ENCODE measurements at regions of chr1 and their contacts with region 1.

Region 1: DNA sequence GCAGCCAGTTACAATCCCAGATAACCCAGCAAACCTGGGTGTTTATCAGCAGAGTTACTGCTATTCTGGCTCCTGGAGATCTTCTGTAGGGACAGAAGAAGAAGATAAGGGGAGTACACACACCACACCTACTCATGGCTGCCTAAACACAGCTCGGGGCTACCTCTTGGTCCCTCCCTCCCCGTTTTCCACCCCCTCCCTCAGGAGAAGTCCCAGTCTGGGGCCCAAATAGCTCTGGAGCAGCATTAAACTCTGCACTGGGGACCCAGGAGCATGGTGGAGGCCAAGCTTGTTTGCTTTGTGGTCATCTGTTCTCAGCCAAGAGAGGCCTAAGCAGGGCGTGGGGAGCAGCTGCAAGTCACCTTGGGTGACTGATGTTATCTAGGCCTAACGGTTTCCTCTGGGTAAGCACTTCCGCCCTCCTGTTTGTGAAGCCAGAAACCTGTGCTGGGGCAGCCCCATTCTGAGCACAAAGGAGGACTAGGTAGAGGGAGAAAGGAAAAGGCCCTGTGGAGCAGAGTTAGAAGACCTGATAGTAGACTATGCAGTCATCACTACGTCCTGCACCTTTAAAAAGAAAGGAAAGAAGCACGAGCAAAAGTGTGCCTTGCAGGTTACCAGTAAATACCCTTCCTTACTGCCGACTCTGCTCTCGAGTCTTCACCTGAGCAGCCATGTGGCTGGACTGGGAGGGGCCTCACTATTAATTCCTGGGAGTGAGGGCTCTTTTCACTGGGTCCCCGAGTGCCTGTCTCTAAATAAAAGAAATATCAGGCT is 2.0 kb upstream of the RCSD1 start:
- DNase-seq: peak; percentile 47 to 92 (median 71)
- ATAC-seq: peak; percentile 78
- H3K4me3 ChIP-seq: peak overlapping the region; percentile 97
- H3K4me3 Mint-ChIP-seq: peak overlapping the region; percentile 94
- H3K27ac ChIP-seq: peak overlapping the region; percentile 71 to 90
- H3K27ac Mint-ChIP-seq: peak overlapping the region; percentile 93
- H3K4me1 ChIP-seq: peaks cover 54% of the 10 kb centered on the region
- H3K4me1 Mint-ChIP-seq: peaks cover 81% of the 10 kb centered on the region
- H3K27me3 ChIP-seq: no peaks in the 10 kb centered on the region
- H3K27me3 Mint-ChIP-seq: no peaks in the 10 kb centered on the region
- CTCF ChIP-seq: no peak

Region 2: GRCh38 chr1:167584581-167584980 is 43.5 kb before region 1 on chr1:
- CTCF ChIA-PET with region 1: no interaction called
- POLR2A ChIA-PET with region 1: no interaction called
- intact Hi-C with region 1: no loop called
- DNase-seq: no peak
- ATAC-seq: no peak
- H3K4me3 ChIP-seq: no peak overlapping the region
- H3K4me3 Mint-ChIP-seq: no peak overlapping the region
- H3K27ac ChIP-seq: no peak overlapping the region
- H3K27ac Mint-ChIP-seq: no peak overlapping the region
- H3K4me1 ChIP-seq: no peaks in the 10 kb centered on the region
- H3K4me1 Mint-ChIP-seq: no peaks in the 10 kb centered on the region
- H3K27me3 ChIP-seq: no peaks in the 10 kb centered on the region
- H3K27me3 Mint-ChIP-seq: no peaks in the 10 kb centered on the region
- CTCF ChIP-seq: no peak

Region 3: GRCh38 chr1:167599957-167600581 is 28.0 kb before region 1 on chr1:
- CTCF ChIA-PET with region 1: interaction called, 8 read pairs
- POLR2A ChIA-PET with region 1: interaction called, 46 read pairs
- intact Hi-C with region 1: loop called in 1 of 2 experiments (anchors 2 kb)
- DNase-seq: peak in 10 of 14 experiments; percentile 11 to 80 (median 30)
- ATAC-seq: peak; percentile 89
- H3K4me3 ChIP-seq: no peak overlapping the region
- H3K4me3 Mint-ChIP-seq: peak overlapping the region; percentile 39
- H3K27ac ChIP-seq: no peak overlapping the region
- H3K27ac Mint-ChIP-seq: no peak overlapping the region
- H3K4me1 ChIP-seq: peaks cover 35% of the 10 kb centered on the region
- H3K4me1 Mint-ChIP-seq: peaks cover 38% of the 10 kb centered on the region
- H3K27me3 ChIP-seq: no peaks in the 10 kb centered on the region
- H3K27me3 Mint-ChIP-seq: no peaks in the 10 kb centered on the region
- CTCF ChIP-seq: peak; percentile 93

Region 4: GRCh38 chr1:167669209-167670124 is 41.4 kb after region 1 on chr1:
- CTCF ChIA-PET with region 1: no interaction called
- POLR2A ChIA-PET with region 1: interaction called, 5 read pairs
- intact Hi-C with region 1: loop called in 1 of 2 experiments (anchors 5 kb)
- DNase-seq: no peak
- ATAC-seq: no peak
- H3K4me3 ChIP-seq: no peak overlapping the region
- H3K4me3 Mint-ChIP-seq: no peak overlapping the region
- H3K27ac ChIP-seq: peak overlapping the region; percentile 4 to 14
- H3K27ac Mint-ChIP-seq: no peak overlapping the region
- H3K4me1 ChIP-seq: peaks cover 59% of the 10 kb centered on the region
- H3K4me1 Mint-ChIP-seq: peaks cover 93% of the 10 kb centered on the region
- H3K27me3 ChIP-seq: no peaks in the 10 kb centered on the region
- H3K27me3 Mint-ChIP-seq: no peaks in the 10 kb centered on the region
- CTCF ChIP-seq: no peak

Region 5: GRCh38 chr1:167681451-167682098 is 53.5 kb after region 1 on chr1:
- CTCF ChIA-PET with region 1: no interaction called
- POLR2A ChIA-PET with region 1: no interaction called
- intact Hi-C with region 1: no loop called
- DNase-seq: no peak
- ATAC-seq: no peak
- H3K4me3 ChIP-seq: no peak overlapping the region
- H3K4me3 Mint-ChIP-seq: no peak overlapping the region
- H3K27ac ChIP-seq: peak overlapping the region in 1 of 2 donors; percentile 17
- H3K27ac Mint-ChIP-seq: no peak overlapping the region
- H3K4me1 ChIP-seq: peaks cover 42% of the 10 kb centered on the region
- H3K4me1 Mint-ChIP-seq: peaks cover 5% of the 10 kb centered on the region
- H3K27me3 ChIP-seq: no peaks in the 10 kb centered on the region
- H3K27me3 Mint-ChIP-seq: no peaks in the 10 kb centered on the region
- CTCF ChIP-seq: no peak

Region 6: GRCh38 chr1:167715157-167715999 is 87.3 kb after region 1 on chr1:
- CTCF ChIA-PET with region 1: interaction called, 6 read pairs
- POLR2A ChIA-PET with region 1: interaction called, 19 read pairs
- intact Hi-C with region 1: no loop called
- DNase-seq: peak; percentile 75 to 94 (median 84)
- ATAC-seq: peak; percentile 59
- H3K4me3 ChIP-seq: peak overlapping the region; percentile 79
- H3K4me3 Mint-ChIP-seq: peak overlapping the region; percentile 92
- H3K27ac ChIP-seq: peak overlapping the region in 1 of 2 donors; percentile 27
- H3K27ac Mint-ChIP-seq: peak overlapping the region; percentile 87
- H3K4me1 ChIP-seq: peaks cover 39% of the 10 kb centered on the region
- H3K4me1 Mint-ChIP-seq: peaks cover 47% of the 10 kb centered on the region
- H3K27me3 ChIP-seq: no peaks in the 10 kb centered on the region
- H3K27me3 Mint-ChIP-seq: peaks cover 18% of the 10 kb centered on the region
- CTCF ChIP-seq: peak; percentile 92

Measured in CD4-positive, alpha-beta T cell (primary cell).